ENCODE measurements at regions of chr15 and their contacts with region 1.

Region 1: GRCh38 chr15:49122541-49123062 is 32.8 kb downstream of the COPS2 start:
- DNase-seq: no peak
- H3K4me3 Mint-ChIP-seq: no peak overlapping the region
- H3K27ac Mint-ChIP-seq: no peak overlapping the region
- H3K4me1 Mint-ChIP-seq: no peaks in the 10 kb centered on the region
- H3K27me3 Mint-ChIP-seq: no peaks in the 10 kb centered on the region
- CTCF ChIP-seq: no peak

Region 2: GRCh38 chr15:49046220-49047102 is 76.1 kb before region 1 on chr15 and contains the start of gene SECISBP2L:
- CTCF ChIA-PET with region 1: no interaction called
- POLR2A ChIA-PET with region 1: interaction called, 4 read pairs
- intact Hi-C with region 1: loop called (anchors 10 kb)
- DNase-seq: peak; percentile 95
- H3K4me3 Mint-ChIP-seq: peak within 1 kb of the TSS; percentile 94
- H3K27ac Mint-ChIP-seq: peak within 1 kb of the TSS; percentile 94
- H3K4me1 Mint-ChIP-seq: peaks cover 9% of the 10 kb centered on the region
- H3K27me3 Mint-ChIP-seq: no peaks in the 10 kb centered on the region
- CTCF ChIP-seq: peak; percentile 11
- total RNA-seq, gene SECISBP2L: 19.6 and 32.3 TPM in 2 replicates

Measured in MCF 10A (cell line).